ENCODE measurements at regions of chr5 and their contacts with region 1.

Region 1: DNA sequence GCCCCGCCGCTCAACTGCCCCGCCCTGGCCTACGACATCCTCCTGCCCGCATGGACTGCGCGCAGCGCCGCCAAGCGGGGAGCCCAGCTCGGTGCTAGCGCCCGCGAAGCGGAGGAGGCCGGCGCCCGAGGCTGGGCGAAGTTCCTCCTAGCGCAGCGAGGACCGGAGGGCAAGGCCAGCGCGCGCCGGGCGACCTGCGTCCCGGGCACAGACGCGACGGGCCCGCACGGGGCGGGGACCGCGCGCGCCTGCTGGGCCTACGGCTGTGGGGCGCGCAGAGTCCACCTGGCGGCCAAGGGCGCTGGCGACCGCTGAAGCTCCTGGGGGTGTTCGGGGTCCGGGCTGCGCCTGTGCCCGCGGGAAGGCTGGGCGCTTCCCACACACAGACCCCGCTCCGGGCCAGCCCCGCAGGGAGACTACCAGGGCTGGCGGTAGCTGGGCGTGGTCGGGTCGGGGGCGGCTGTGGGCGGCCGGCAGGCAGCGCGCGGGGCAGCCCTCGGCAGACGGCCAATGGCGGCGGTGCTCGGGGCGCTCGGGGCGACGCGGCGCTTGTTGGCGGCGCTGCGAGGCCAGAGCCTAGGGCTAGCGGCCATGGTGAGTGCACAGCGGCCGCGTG is at the start of gene PCBD2:
- DNase-seq: peak; percentile 87 to 95 (median 94)
- ATAC-seq: peak; percentile 92
- H3K4me3 ChIP-seq: peak within 1 kb of the TSS; percentile 87
- H3K27ac ChIP-seq: peak within 1 kb of the TSS; percentile 92
- H3K4me1 ChIP-seq: peaks cover 2 to 25% of the 10 kb centered on the region in 2 experiments; a peak in 4 of 5 replicates
- H3K27me3 ChIP-seq: no peaks in the 10 kb centered on the region
- CTCF ChIP-seq: peak; percentile 89 to 95 (median 93)
- EP300 ChIP-seq: 0 out of 2 replicates have a peak, but pooled peaks have one; percentile 17
- POLR2A ChIP-seq: peak; percentile 68; the same call in 1 of the 2 replicates
- RAD21 ChIP-seq: peak; percentile 79 to 84
- polyA plus RNA-seq, gene PCBD2: 7.1 to 7.8 TPM

Region 2: GRCh38 chr5:134738133-134738962 is 166.4 kb before region 1 on chr5 and contains the start of gene CAMLG:
- CTCF ChIA-PET with region 1: interaction called, 3 read pairs
- POLR2A ChIA-PET with region 1: interaction called, 3 read pairs
- in situ Hi-C with region 1: no loop called
- intact Hi-C with region 1: loop called (anchors 2 kb)
- DNase-seq: peak; percentile 93 to 99 (median 94)
- ATAC-seq: peak; percentile 98
- H3K4me3 ChIP-seq: peak within 1 kb of the TSS; percentile 71
- H3K27ac ChIP-seq: peak within 1 kb of the TSS; percentile 71
- H3K4me1 ChIP-seq: peaks cover 13 to 15% of the 10 kb centered on the region in 2 experiments
- H3K27me3 ChIP-seq: no peaks in the 10 kb centered on the region
- CTCF ChIP-seq: peak; percentile 77 to 84 (median 83)
- EP300 ChIP-seq: no peak
- POLR2A ChIP-seq: peak; percentile 85
- RAD21 ChIP-seq: peak; percentile 62 to 81
- polyA plus RNA-seq, gene CAMLG: 16.3 to 17.3 TPM

Region 3: GRCh38 chr5:134873987-134874830 is 30.5 kb before region 1 on chr5 and contains the start of gene TXNDC15:
- CTCF ChIA-PET with region 1: no interaction called
- POLR2A ChIA-PET with region 1: interaction called, 8 read pairs
- in situ Hi-C with region 1: no loop called
- intact Hi-C with region 1: loop called (anchors 1 kb)
- DNase-seq: peak; percentile 78 to 88 (median 82)
- ATAC-seq: peak; percentile 96
- H3K4me3 ChIP-seq: peak within 1 kb of the TSS; percentile 62
- H3K27ac ChIP-seq: peak within 1 kb of the TSS; percentile 89
- H3K4me1 ChIP-seq: peaks cover 18 to 20% of the 10 kb centered on the region in 2 experiments; a peak in 4 of 5 replicates
- H3K27me3 ChIP-seq: no peaks in the 10 kb centered on the region
- CTCF ChIP-seq: no peak
- EP300 ChIP-seq: no peak
- POLR2A ChIP-seq: peak; percentile 88
- RAD21 ChIP-seq: no peak
- polyA plus RNA-seq, gene TXNDC15: 3.0 to 3.1 TPM

Region 4: DNA sequence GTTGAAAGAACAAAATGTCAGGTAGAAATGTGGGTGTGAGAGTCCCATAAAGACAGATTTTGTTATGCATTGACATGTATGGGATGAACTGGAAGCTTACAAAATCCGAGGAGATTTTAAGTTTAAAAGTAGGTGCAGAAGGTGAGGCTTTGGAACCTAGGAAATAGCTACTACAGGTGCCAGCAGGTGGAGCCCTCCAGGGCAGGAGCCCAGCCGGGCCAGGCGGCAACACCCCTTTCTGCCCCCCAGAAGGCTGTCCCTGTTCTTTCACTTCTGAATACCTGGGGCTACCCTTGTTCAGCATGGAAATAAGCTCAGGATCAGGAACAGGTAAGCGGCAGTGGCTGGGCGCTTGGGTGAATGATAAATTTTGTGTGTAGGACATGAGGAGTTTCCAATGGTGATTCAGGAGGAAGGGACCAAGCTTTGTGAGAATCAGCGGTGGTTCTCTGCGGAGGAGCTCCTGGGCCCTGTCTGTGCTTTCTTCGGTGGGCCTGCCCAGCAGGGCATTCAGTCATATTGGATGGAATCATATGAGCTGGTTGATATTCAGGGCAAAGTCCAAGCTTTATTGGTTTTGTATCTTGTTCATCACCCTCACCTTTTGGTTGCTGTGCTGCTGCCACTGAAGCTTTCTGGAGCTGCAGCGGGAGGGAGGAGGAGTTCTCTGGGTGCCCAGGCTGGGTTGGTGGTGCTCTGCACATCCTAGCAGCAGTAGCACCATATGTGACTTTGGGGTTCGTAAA is 12.5 kb after region 1 on chr5:
- CTCF ChIA-PET with region 1: interaction called, 3 read pairs
- POLR2A ChIA-PET with region 1: interaction called, 11 read pairs
- in situ Hi-C with region 1: no loop called
- intact Hi-C with region 1: no loop called
- DNase-seq: peak; percentile 9 to 33 (median 25)
- ATAC-seq: peak; percentile 70
- H3K4me3 ChIP-seq: no peak overlapping the region
- H3K27ac ChIP-seq: no peak overlapping the region
- H3K4me1 ChIP-seq: no peaks in the 10 kb centered on the region; a peak in 2 of 5 replicates
- H3K27me3 ChIP-seq: no peaks in the 10 kb centered on the region
- CTCF ChIP-seq: peak; percentile 40 to 52 (median 46); a peak in 5 of 6 replicates
- EP300 ChIP-seq: no peak
- POLR2A ChIP-seq: no peak
- RAD21 ChIP-seq: peak; percentile 13 to 43; a peak in 3 of 4 replicates

Region 5: DNA sequence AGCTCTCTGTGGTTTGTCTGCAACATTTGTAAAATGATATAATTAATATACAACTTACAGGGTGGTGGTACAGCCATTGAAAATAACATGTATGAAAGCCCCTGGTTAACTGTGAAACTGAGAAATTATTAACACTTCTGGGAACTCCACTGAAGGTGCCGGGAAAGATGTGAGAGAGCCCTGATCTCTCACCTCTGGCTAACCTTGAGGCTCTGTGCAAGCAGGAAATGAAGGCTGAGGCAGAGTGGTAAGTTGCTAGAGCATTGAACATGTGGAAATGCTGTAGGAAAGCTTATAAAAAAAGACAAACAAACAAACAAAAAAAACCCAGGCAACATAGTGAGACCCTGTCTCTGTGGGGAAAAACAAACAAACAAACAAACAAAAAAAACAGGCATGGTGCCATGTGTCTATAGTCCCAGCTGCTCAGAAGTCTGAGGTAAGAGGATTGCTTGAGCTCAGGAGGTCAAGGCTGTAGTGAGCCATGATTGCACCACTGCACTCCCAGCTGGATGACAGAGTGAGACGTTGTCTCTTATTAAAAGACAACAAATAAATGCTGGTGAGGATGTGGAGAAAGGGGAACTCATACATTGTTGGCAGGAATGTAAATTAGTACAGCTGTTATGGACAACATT is 70.5 kb after region 1 on chr5:
- CTCF ChIA-PET with region 1: no interaction called
- POLR2A ChIA-PET with region 1: no interaction called
- in situ Hi-C with region 1: no loop called
- intact Hi-C with region 1: no loop called
- DNase-seq: no peak
- ATAC-seq: no peak
- H3K4me3 ChIP-seq: no peak overlapping the region
- H3K27ac ChIP-seq: no peak overlapping the region
- H3K4me1 ChIP-seq: no peaks in the 10 kb centered on the region
- H3K27me3 ChIP-seq: no peaks in the 10 kb centered on the region
- CTCF ChIP-seq: no peak
- EP300 ChIP-seq: no peak
- POLR2A ChIP-seq: no peak
- RAD21 ChIP-seq: no peak